HEK293 (cell line): ENCODE measurements at regions of chr15 and their contacts with region 1.

Region 1: GRCh38 chr15:69280783-69281182 is 17.9 kb upstream of the PAQR5 start:
- H3K4me3 ChIP-seq: no peak overlapping the region
- H3K27ac ChIP-seq: no peak overlapping the region
- H3K4me1 ChIP-seq: peaks cover under 1% of the 10 kb centered on the region; the same call in 1 of the 2 replicates
- CTCF ChIP-seq: no peak

Region 2: DNA sequence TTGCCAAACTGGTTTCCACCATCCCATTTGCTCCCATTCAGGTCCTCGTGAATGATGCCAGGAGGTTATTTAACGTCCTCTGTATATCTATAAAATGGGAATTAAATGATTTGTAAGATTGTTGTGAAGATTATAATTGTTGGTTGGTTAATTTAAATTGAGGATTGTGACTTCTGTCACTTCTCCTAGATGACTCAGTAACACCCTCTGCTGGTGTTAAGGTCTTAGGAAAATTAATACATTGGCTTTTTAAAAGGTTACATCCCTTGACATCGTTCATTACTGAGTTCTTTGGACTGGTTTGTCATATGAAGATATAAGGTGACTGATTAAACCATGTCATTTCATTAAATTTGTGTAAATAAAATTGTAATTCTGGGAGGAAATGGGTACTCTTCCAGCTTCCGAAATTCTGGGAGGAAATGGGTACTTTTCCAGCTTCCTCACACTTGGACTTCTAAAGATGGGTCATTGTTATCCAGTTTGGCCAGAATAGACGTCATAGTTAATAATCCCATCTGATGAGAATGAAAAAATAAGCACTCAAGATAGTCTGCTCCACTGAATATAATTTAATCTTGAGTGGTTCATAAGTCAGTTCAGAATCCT is 15.3 kb before region 1 on chr15:
- CTCF ChIA-PET with region 1: interaction called, 19 read pairs
- POLR2A ChIA-PET with region 1: no interaction called
- H3K4me3 ChIP-seq: no peak overlapping the region
- H3K27ac ChIP-seq: no peak overlapping the region
- H3K4me1 ChIP-seq: no peaks in the 10 kb centered on the region
- CTCF ChIP-seq: peak; percentile 58; the same call in 1 of the 2 replicates